Posterior vena cava (tissue), 2 donors: ENCODE measurements at regions of chr15 and their contacts with region 1.

Region 1: GRCh38 chr15:89352476-89352875 is 17.9 kb upstream of the POLG start:
- DNase-seq: no peak

Region 2: DNA sequence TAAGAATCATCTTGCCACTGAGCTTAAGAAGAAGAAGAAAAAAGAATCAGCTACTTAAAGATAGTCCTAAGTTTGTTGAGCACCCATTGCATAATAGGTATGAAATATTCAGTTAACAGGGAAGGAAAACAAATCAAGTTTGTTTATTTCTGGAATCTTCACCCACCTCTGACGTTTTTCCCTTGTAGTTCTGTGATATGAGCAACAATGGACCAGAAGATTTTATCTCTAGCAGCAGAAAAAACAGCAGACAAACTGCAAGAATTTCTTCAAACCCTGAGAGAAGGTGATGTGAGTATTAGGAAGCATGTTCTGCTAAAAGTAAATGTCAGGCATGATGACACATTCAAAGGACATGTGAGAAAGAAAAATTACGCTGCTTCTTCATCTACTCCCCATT is 105.0 kb before region 1 on chr15:
- intact Hi-C with region 1: no loop called
- DNase-seq: no peak

Region 3: DNA sequence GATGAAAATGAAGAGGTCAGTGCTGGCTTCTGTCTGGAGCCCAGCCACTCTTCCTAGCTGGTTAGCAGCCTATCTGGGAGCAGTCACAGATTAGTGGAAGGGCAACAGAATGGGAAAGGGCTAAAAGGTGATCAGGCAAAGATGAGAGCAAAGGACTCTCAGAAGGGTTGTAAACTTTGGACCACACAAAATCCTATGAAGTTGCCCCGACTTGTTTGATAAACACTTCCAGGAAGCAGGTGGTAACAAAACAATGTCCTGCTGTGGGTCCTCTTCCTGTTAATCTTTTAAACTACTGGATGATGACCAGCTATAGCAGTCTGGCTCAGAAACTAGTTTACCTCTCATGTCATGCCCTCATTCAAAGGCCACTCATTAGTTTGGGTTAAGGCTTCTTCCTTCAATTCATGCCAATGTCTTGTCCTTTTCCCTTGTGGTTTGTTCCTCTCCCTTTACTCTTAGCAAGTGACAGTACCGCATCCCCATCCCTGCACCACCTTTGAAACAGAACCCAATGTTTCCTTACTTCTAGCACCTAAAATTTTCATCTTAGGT is 37.0 kb before region 1 on chr15:
- intact Hi-C with region 1: loop called in 1 of 2 experiments (anchors 2 kb)
- DNase-seq: no peak

Region 4: DNA sequence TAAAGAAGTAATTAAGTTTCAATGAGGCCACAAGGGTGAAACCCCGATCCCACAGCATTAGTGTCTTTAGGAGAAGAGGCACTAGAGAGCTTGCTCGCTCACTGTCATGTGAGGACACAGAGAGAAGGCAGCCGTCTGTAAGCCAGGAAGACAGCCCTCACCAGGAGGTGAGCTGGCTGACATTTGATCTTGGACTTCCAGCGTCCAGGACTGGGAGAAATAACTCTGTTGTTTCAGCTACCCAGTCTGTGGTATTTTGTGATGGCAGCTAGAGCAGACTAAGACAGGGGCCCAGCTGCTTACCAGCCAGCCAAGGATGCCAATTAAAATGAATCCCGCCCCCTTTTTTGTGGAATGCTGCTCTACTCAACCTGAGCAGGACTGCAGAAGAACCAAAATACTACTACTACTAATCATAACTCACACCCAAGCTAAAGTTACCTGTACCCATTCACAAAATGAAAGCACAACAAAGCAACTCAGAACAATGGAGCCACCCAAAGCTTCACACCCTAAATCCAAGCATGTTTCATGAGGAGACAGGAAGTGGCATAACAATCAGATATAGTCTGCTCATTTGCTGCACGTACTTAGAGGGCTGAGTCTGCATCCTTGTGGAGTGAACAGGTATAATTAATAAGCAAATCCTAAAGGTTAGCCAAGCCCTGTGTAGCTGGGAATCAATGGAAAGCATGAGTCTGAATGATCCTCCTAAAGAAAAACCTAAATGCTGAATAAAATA is 179.5 kb after region 1 on chr15:
- intact Hi-C with region 1: no loop called
- DNase-seq: no peak